ENCODE measurements at regions of chr5 and their contacts with region 1.

Region 1: GRCh38 chr5:69334793-69335268 is 2.2 kb upstream of the CCDC125 start:
- DNase-seq: peak; percentile 67 to 91
- H3K4me3 ChIP-seq: no peak overlapping the region
- H3K27ac ChIP-seq: no peak overlapping the region
- H3K4me1 ChIP-seq: peaks cover 0 to 2% (median 0%) of the 10 kb centered on the region in 4 experiments; a peak in 3 of 7 replicates
- H3K27me3 ChIP-seq: no peaks in the 10 kb centered on the region
- CTCF ChIP-seq: peak; percentile 83 to 87 (median 85)
- EP300 ChIP-seq: no peak
- POLR2A ChIP-seq: no peak
- RAD21 ChIP-seq: peak; percentile 77

Region 2: GRCh38 chr5:69265931-69266330 is 68.9 kb before region 1 on chr5:
- CTCF ChIA-PET with region 1: interaction called, 28 read pairs
- POLR2A ChIA-PET with region 1: no interaction called
- DNase-seq: peak; percentile 49 to 85
- H3K4me3 ChIP-seq: no peak overlapping the region
- H3K27ac ChIP-seq: no peak overlapping the region
- H3K4me1 ChIP-seq: no peaks in the 10 kb centered on the region
- H3K27me3 ChIP-seq: no peaks in the 10 kb centered on the region
- CTCF ChIP-seq: peak; percentile 78 to 94 (median 82)
- EP300 ChIP-seq: no peak
- POLR2A ChIP-seq: no peak
- RAD21 ChIP-seq: peak; percentile 67 to 79

Region 3: GRCh38 chr5:69317391-69317790 is 17.4 kb before region 1 on chr5:
- CTCF ChIA-PET with region 1: interaction called, 14 read pairs
- POLR2A ChIA-PET with region 1: interaction called, 3 read pairs
- DNase-seq: no peak
- H3K4me3 ChIP-seq: no peak overlapping the region
- H3K27ac ChIP-seq: no peak overlapping the region
- H3K4me1 ChIP-seq: no peaks in the 10 kb centered on the region
- H3K27me3 ChIP-seq: no peaks in the 10 kb centered on the region
- CTCF ChIP-seq: no peak
- EP300 ChIP-seq: no peak
- POLR2A ChIP-seq: no peak
- RAD21 ChIP-seq: no peak